ENCODE measurements at regions of chr9 and their contacts with region 1.

Region 1: GRCh38 chr9:79883073-79883645 is 311.4 kb downstream of the TLE4 start:
- DNase-seq: peak; percentile 60
- ATAC-seq: peak; percentile 74
- H3K4me3 ChIP-seq: peak overlapping the region in 2 of 5 experiments; percentile 5 to 14
- H3K4me3 Mint-ChIP-seq: peak overlapping the region; percentile 85
- H3K27ac ChIP-seq: no peak overlapping the region
- H3K27ac Mint-ChIP-seq: peak overlapping the region; percentile 81
- H3K4me1 ChIP-seq: peaks cover 65 to 66% of the 10 kb centered on the region in 2 donors
- H3K4me1 Mint-ChIP-seq: peaks cover 72% of the 10 kb centered on the region
- H3K27me3 ChIP-seq: no peaks in the 10 kb centered on the region
- H3K27me3 Mint-ChIP-seq: no peaks in the 10 kb centered on the region
- CTCF ChIP-seq: no peak

Region 2: GRCh38 chr9:79847074-79847473 is 36.1 kb before region 1 on chr9:
- CTCF ChIA-PET with region 1: no interaction called
- POLR2A ChIA-PET with region 1: no interaction called
- intact Hi-C with region 1: loop called (anchors 5 kb)
- DNase-seq: no peak
- ATAC-seq: no peak
- H3K4me3 ChIP-seq: no peak overlapping the region
- H3K4me3 Mint-ChIP-seq: no peak overlapping the region
- H3K27ac ChIP-seq: no peak overlapping the region
- H3K27ac Mint-ChIP-seq: no peak overlapping the region
- H3K4me1 ChIP-seq: no peaks in the 10 kb centered on the region
- H3K4me1 Mint-ChIP-seq: no peaks in the 10 kb centered on the region
- H3K27me3 ChIP-seq: no peaks in the 10 kb centered on the region
- H3K27me3 Mint-ChIP-seq: no peaks in the 10 kb centered on the region
- CTCF ChIP-seq: no peak

Region 3: DNA sequence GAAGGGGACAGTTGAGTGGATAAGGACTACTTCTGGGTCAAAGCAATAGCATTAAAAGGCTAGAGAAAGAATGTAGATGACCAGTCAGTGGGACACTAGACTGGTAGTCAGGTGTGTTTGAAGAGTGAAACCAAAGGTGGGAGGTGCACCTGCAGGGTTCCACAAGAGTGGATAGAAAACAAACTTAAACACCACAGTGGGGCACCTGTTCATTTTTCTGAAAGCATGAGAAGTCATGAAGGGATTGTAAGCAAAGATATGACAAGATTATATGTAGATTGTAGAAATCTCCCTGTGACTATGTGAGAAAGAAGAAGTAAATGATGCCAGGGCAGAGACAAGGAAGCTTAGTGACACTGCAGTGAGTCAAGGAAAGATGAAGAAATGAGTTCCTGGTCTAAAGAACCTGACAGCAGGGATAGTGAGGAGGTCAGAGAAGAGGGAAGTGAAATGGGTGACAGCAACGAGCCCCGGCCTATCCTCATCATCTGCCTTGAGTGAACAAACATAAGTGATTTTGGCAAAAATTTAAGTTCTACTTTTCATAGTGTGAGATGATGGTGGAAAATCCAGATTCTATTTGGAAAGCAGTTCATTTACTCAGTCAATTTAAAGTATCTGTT is 14.5 kb before region 1 on chr9:
- CTCF ChIA-PET with region 1: no interaction called
- POLR2A ChIA-PET with region 1: no interaction called
- intact Hi-C with region 1: loop called (anchors 2 kb)
- DNase-seq: peak; percentile 57
- ATAC-seq: peak; percentile 63
- H3K4me3 ChIP-seq: no peak overlapping the region
- H3K4me3 Mint-ChIP-seq: no peak overlapping the region
- H3K27ac ChIP-seq: peak overlapping the region; percentile 12 to 55
- H3K27ac Mint-ChIP-seq: no peak overlapping the region
- H3K4me1 ChIP-seq: peaks cover 36 to 48% of the 10 kb centered on the region in 2 donors
- H3K4me1 Mint-ChIP-seq: peaks cover 25% of the 10 kb centered on the region
- H3K27me3 ChIP-seq: no peaks in the 10 kb centered on the region
- H3K27me3 Mint-ChIP-seq: no peaks in the 10 kb centered on the region
- CTCF ChIP-seq: no peak

Region 4: GRCh38 chr9:80134487-80134886 is 251.3 kb after region 1 on chr9:
- CTCF ChIA-PET with region 1: no interaction called
- POLR2A ChIA-PET with region 1: no interaction called
- intact Hi-C with region 1: loop called (anchors 10 kb)
- DNase-seq: peak; percentile 91
- ATAC-seq: peak; percentile 96
- H3K4me3 ChIP-seq: no peak overlapping the region
- H3K4me3 Mint-ChIP-seq: peak overlapping the region; percentile 57
- H3K27ac ChIP-seq: peak overlapping the region; percentile 93 to 95
- H3K27ac Mint-ChIP-seq: peak overlapping the region; percentile 88
- H3K4me1 ChIP-seq: peaks cover 31 to 35% of the 10 kb centered on the region in 2 donors
- H3K4me1 Mint-ChIP-seq: peaks cover 42% of the 10 kb centered on the region
- H3K27me3 ChIP-seq: no peaks in the 10 kb centered on the region
- H3K27me3 Mint-ChIP-seq: no peaks in the 10 kb centered on the region
- CTCF ChIP-seq: no peak

Measured in B cell (primary cell).